HEK293 (cell line): ENCODE measurements at regions of chr11 and their contacts with region 1.

Region 1: GRCh38 chr11:36265793-36266628 is 23.2 kb downstream of the COMMD9 start:
- H3K4me3 ChIP-seq: no peak overlapping the region
- H3K27ac ChIP-seq: no peak overlapping the region
- H3K4me1 ChIP-seq: no peaks in the 10 kb centered on the region
- CTCF ChIP-seq: peak; percentile 21; the same call in 1 of the 2 replicates

Region 2: GRCh38 chr11:34926101-34926830 is 1339.7 kb before region 1 on chr11:
- CTCF ChIA-PET with region 1: interaction called, 10 read pairs
- POLR2A ChIA-PET with region 1: no interaction called
- H3K4me3 ChIP-seq: no peak overlapping the region
- H3K27ac ChIP-seq: no peak overlapping the region
- H3K4me1 ChIP-seq: 0 out of 2 replicates have a peak, but pooled peaks cover 4% of the 10 kb centered on the region
- CTCF ChIP-seq: peak; percentile 33; the same call in 1 of the 2 replicates

Region 3: DNA sequence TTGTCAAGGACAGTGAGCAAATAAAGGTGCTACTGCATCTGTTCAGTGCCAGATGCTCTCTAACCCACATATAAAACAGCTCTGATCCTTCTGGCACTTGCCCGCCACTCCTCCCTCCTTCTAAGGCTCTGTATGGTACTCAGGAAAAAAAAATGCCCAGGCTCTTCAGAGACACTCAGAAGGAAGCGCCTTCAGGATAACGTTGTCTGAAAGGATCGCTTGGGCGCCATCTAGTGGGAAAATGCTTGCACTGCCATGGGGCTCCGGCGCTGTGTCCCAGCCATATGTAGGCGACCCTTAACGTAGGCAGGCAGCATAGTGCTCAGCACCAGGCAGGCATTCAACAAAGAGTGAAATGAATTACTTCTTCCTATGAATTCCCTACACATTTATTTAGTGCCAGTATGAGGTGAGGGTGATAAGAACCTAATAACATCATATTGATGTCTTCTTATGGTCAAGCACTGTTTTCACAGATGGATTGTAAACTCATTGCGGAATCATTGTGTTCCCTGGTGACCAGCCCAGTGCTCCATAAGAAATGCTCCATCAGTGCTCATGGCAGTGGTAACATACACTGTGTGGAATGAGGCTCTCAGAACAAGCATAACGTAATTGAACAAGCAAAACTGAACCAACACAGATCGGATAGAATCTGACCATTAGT is 780.2 kb before region 1 on chr11:
- CTCF ChIA-PET with region 1: interaction called, 17 read pairs
- POLR2A ChIA-PET with region 1: no interaction called
- H3K4me3 ChIP-seq: no peak overlapping the region
- H3K27ac ChIP-seq: no peak overlapping the region
- H3K4me1 ChIP-seq: no peaks in the 10 kb centered on the region
- CTCF ChIP-seq: peak; percentile 45; the same call in 1 of the 2 replicates

Region 4: GRCh38 chr11:36041988-36042611 is 223.9 kb before region 1 on chr11:
- CTCF ChIA-PET with region 1: interaction called, 17 read pairs
- POLR2A ChIA-PET with region 1: no interaction called
- H3K4me3 ChIP-seq: no peak overlapping the region
- H3K27ac ChIP-seq: no peak overlapping the region
- H3K4me1 ChIP-seq: no peaks in the 10 kb centered on the region
- CTCF ChIP-seq: peak; percentile 25; the same call in 1 of the 2 replicates

Region 5: GRCh38 chr11:36278531-36279282 is 12.7 kb after region 1 on chr11:
- CTCF ChIA-PET with region 1: interaction called, 15 read pairs
- POLR2A ChIA-PET with region 1: no interaction called
- H3K4me3 ChIP-seq: no peak overlapping the region
- H3K27ac ChIP-seq: no peak overlapping the region
- H3K4me1 ChIP-seq: no peaks in the 10 kb centered on the region
- CTCF ChIP-seq: no peak

Region 6: GRCh38 chr11:36492724-36493304 is 226.8 kb after region 1 on chr11:
- CTCF ChIA-PET with region 1: interaction called, 11 read pairs
- POLR2A ChIA-PET with region 1: no interaction called
- H3K4me3 ChIP-seq: no peak overlapping the region
- H3K27ac ChIP-seq: no peak overlapping the region
- H3K4me1 ChIP-seq: no peaks in the 10 kb centered on the region
- CTCF ChIP-seq: no peak